ENCODE measurements at regions of chr2 and their contacts with region 1.

Region 1: GRCh38 chr2:25951071-25951547 is 31.2 kb downstream of the KIF3C start:
- DNase-seq: peak; percentile 77
- H3K4me3 ChIP-seq: no peak overlapping the region
- H3K27ac ChIP-seq: no peak overlapping the region
- H3K4me1 ChIP-seq: peaks cover 19% of the 10 kb centered on the region
- CTCF ChIP-seq: peak; percentile 99

Region 2: GRCh38 chr2:25851740-25852503 is 99.2 kb before region 1 on chr2:
- CTCF ChIA-PET with region 1: interaction called, 3 read pairs
- POLR2A ChIA-PET with region 1: no interaction called
- intact Hi-C with region 1: loop called (anchors 5 kb)
- DNase-seq: peak; percentile 78
- H3K4me3 ChIP-seq: no peak overlapping the region
- H3K27ac ChIP-seq: peak overlapping the region; percentile 11
- H3K4me1 ChIP-seq: peaks cover 19% of the 10 kb centered on the region
- CTCF ChIP-seq: peak; percentile 90

Region 3: GRCh38 chr2:25991965-25992364 is 40.9 kb after region 1 on chr2:
- CTCF ChIA-PET with region 1: no interaction called
- POLR2A ChIA-PET with region 1: no interaction called
- intact Hi-C with region 1: loop called (anchors 1 kb)
- DNase-seq: no peak
- H3K4me3 ChIP-seq: no peak overlapping the region
- H3K27ac ChIP-seq: no peak overlapping the region
- H3K4me1 ChIP-seq: no peaks in the 10 kb centered on the region
- CTCF ChIP-seq: no peak